ENCODE measurements at regions of chr3 and their contacts with region 1.

Region 1: GRCh38 chr3:197484204-197484882 is 71.4 kb downstream of the BDH1 start:
- DNase-seq: no peak
- H3K4me3 ChIP-seq: no peak overlapping the region
- H3K27ac ChIP-seq: peak overlapping the region in 1 of 2 experiments; percentile 87; a peak in 2 of 4 replicates
- H3K4me1 ChIP-seq: peaks cover 31 to 46% of the 10 kb centered on the region in 2 experiments
- H3K27me3 ChIP-seq: no peaks in the 10 kb centered on the region
- CTCF ChIP-seq: no peak
- EP300 ChIP-seq: no peak
- RAD21 ChIP-seq: no peak

Region 2: GRCh38 chr3:197445896-197446711 is 38.2 kb before region 1 on chr3:
- CTCF ChIA-PET with region 1: no interaction called
- POLR2A ChIA-PET with region 1: no interaction called
- DNase-seq: no peak
- H3K4me3 ChIP-seq: no peak overlapping the region
- H3K27ac ChIP-seq: no peak overlapping the region
- H3K4me1 ChIP-seq: no peaks in the 10 kb centered on the region
- H3K27me3 ChIP-seq: no peaks in the 10 kb centered on the region; the same call in 1 of the 2 replicates
- CTCF ChIP-seq: no peak
- EP300 ChIP-seq: no peak
- RAD21 ChIP-seq: no peak

Region 3: DNA sequence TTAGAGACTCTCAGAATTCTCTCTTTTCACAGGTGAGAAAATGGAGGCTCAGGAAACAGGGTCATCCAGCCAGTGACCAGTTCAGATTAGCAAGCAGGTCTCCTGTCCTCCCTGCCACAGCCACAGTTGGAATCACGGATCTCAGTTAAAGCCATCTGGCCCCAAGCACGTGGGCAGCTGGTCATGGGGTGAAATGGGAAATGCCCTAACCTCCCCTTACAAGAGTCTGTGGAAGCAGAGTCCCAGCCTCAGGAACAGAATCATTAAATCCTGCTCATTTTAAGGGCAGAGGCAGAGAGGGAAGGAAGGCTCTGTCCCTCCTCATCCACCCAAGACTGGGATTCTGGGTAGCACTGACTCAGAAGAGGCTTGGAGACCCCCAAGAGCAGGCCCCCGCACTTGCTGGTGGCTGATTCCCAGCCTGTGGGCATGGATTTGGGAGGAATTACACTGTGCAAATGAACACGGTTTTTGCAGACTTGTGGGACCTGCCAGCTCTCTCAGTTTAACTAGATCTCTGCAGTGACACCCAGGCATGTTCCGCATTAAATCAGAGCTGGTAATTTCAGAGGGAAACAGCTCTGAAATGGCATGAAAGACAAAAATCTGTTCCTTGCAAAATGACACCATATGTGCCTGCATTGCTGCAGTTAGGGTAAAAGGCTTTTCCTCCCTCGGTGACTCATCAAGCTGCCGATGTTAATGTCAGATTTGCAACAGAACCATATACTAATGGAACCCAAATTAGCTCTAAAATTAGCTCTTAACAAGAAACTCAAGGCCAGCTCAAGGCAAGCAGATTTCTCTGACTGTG is 17.6 kb before region 1 on chr3:
- CTCF ChIA-PET with region 1: interaction called, 10 read pairs
- POLR2A ChIA-PET with region 1: interaction called, 9 read pairs
- DNase-seq: peak; percentile 78
- H3K4me3 ChIP-seq: peak overlapping the region; percentile 28 to 30; a peak in 3 of 4 replicates
- H3K27ac ChIP-seq: peak overlapping the region; percentile 82 to 99
- H3K4me1 ChIP-seq: peaks cover 24 to 52% of the 10 kb centered on the region in 2 experiments
- H3K27me3 ChIP-seq: no peaks in the 10 kb centered on the region
- CTCF ChIP-seq: no peak
- EP300 ChIP-seq: peak; percentile 81 to 90
- RAD21 ChIP-seq: peak; percentile 25

Measured in SK-N-SH (cell line).